PC-9 (cell line): ENCODE measurements at regions of chr15 and their contacts with region 1.

Region 1: DNA sequence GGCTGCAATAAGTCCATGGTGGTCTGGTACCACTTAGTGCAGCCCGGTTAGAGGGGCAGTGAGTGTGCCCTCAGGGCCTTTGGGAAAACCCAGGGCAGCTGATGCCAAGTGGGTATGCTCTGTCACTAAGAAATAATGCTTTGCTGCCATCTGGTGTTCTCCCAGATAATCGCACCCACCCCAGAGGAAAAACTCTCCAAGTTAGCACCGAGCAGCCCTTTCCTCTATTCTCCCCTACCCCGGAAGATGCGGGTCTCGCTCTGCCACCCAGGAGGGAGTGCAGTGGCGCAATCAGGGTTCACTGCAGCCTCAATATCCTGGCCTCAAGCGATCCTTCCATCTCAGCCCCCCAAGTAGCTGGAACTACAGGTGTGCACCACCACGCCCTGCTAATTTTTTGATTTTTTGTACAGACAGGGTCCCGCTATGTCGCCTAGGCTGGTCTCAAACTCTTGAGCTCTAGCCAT is 21.3 kb upstream of the DAPK2 start:
- DNase-seq: peak in 1 of 2 experiments; percentile 59
- H3K4me3 ChIP-seq: no peak overlapping the region
- H3K27ac ChIP-seq: no peak overlapping the region
- H3K4me1 ChIP-seq: no peaks in the 10 kb centered on the region
- H3K27me3 ChIP-seq: no peaks in the 10 kb centered on the region
- CTCF ChIP-seq: peak; percentile 80

Region 2: DNA sequence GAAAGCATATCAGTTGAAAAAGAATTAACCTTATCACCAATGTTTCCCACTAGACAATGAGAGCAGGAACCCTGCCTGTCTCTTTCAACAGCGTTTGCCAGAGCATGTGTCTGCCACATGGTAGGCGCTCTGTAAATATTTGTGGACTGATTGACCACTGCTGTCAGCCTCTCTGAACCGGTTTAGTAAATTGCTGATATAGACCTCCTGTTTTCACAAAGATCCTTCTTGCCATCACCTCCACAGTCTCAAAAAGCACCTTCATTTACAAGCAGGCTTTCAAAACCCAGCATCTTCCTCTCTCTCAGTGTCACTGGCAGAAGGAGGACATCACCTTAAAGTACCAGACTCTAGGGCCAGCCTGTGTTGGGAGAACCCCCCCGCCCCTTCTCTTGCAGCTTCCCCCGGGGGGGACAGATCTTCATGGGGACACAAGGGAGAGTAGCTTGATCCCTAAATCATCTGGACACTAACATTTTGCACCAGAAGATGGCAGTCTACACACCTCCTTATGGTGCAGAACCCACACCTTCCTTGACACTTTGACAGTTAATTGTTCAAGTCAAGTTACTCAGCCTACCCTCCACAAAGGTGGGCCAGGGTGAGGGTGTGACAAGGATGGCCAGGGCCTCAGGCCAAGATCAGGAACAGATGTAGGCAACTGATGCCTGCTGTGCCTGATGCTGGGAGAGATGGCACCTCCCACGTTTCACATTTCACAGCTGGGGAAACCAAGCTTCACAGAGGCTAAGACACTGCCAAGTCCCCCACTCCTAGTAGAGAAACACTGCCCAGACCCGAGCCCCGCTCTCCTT is 601.0 kb before region 1 on chr15:
- CTCF ChIA-PET with region 1: no interaction called
- POLR2A ChIA-PET with region 1: no interaction called
- intact Hi-C with region 1: loop called (anchors 10 kb)
- DNase-seq: peak; percentile 38 to 39
- H3K4me3 ChIP-seq: no peak overlapping the region
- H3K27ac ChIP-seq: no peak overlapping the region
- H3K4me1 ChIP-seq: peaks cover 12% of the 10 kb centered on the region
- H3K27me3 ChIP-seq: no peaks in the 10 kb centered on the region
- CTCF ChIP-seq: peak; percentile 65

Region 3: DNA sequence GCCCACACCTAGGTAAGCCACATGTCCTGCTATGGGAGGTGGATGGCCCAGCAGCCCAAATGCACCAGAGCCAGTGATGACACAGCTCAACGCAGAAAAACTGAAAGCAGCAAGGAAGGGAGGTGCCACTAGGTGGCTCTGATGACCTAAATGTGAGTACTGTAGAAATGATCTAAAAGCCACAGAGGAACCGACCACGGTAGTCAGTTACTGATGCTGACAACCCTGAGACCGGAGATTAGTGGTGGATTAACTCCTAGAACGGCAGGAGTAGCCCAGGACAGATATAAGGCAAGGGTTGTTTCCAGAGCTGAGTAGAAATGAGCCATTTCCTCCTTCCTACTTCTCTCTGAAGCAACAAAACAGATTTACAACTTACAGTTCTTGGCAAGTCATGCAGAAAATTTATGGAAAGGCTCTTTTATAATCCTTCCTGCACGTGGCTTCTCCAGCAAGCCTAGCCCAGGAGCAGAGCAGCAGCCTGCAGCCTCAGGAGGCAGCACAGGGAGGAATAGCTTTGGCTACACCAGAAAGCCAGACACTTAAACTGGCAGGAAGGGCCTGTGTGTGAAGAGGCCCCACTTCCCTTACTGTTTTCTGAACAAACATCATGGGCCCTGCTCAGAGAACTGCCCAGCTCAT is 457.3 kb before region 1 on chr15:
- CTCF ChIA-PET with region 1: interaction called, 4 read pairs
- POLR2A ChIA-PET with region 1: no interaction called
- intact Hi-C with region 1: loop called (anchors 1 kb)
- DNase-seq: peak; percentile 68 to 77
- H3K4me3 ChIP-seq: no peak overlapping the region
- H3K27ac ChIP-seq: peak overlapping the region; percentile 55
- H3K4me1 ChIP-seq: peaks cover 22% of the 10 kb centered on the region
- H3K27me3 ChIP-seq: no peaks in the 10 kb centered on the region
- CTCF ChIP-seq: peak; percentile 84

Region 4: DNA sequence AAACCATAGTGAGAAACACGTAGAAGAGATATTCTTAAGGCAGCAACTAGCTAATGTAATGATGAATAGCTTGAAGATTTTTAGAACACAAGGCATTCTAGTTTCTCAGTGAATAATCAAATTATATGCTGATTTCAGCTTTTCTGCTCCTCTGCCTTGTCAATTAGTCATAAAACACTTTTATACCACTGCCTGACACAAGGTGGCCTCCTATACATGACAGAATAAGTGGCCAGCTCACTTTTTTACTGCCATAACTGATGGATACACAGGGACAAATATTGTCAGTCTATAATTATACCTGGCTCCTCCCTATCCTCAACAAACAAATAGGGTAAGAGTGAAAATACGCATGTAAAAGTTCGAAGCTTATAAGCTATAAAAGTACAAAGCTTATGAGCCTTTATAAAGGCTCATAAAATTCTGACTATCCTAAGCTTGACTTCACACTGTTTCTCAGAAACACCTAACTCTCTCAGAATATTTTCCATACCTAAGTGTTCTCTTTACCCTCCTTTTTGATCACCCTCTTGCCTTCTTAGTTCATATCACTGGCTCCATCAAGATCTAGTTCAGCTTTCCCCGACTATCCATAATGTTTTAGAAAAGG is 315.4 kb before region 1 on chr15:
- CTCF ChIA-PET with region 1: interaction called, 31 read pairs
- POLR2A ChIA-PET with region 1: no interaction called
- intact Hi-C with region 1: loop called (anchors 1 kb)
- DNase-seq: peak in 1 of 2 experiments; percentile 11
- H3K4me3 ChIP-seq: no peak overlapping the region
- H3K27ac ChIP-seq: no peak overlapping the region
- H3K4me1 ChIP-seq: no peaks in the 10 kb centered on the region
- H3K27me3 ChIP-seq: no peaks in the 10 kb centered on the region
- CTCF ChIP-seq: peak; percentile 73

Region 5: DNA sequence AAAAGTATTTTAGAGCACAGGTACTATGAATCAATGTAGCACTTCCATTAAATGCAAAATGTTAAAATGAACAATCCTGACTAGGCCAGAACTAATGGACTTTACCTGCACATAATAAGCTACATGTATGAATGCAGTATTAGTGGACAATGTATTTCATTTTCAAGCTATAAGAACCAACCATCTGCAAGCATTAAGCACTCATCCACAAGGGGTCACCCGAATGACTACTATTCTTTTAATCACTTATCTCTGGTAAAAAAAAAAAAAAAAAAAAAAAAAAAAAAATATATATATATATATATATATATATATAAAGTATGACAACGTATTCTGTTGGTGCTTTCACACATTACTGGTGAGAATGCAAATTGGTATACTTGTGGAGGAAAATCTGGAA is 241.1 kb before region 1 on chr15:
- CTCF ChIA-PET with region 1: interaction called, 3 read pairs
- POLR2A ChIA-PET with region 1: no interaction called
- intact Hi-C with region 1: loop called (anchors 1 kb)
- DNase-seq: no peak
- H3K4me3 ChIP-seq: no peak overlapping the region
- H3K27ac ChIP-seq: no peak overlapping the region
- H3K4me1 ChIP-seq: no peaks in the 10 kb centered on the region
- H3K27me3 ChIP-seq: no peaks in the 10 kb centered on the region
- CTCF ChIP-seq: peak; percentile 38

Region 6: GRCh38 chr15:63833021-63833696 is 234.4 kb before region 1 on chr15:
- CTCF ChIA-PET with region 1: no interaction called
- POLR2A ChIA-PET with region 1: no interaction called
- intact Hi-C with region 1: loop called (anchors 1 kb)
- DNase-seq: peak in 1 of 2 experiments; percentile 37
- H3K4me3 ChIP-seq: peak overlapping the region; percentile 90
- H3K27ac ChIP-seq: no peak overlapping the region
- H3K4me1 ChIP-seq: peaks cover 16% of the 10 kb centered on the region
- H3K27me3 ChIP-seq: no peaks in the 10 kb centered on the region
- CTCF ChIP-seq: no peak

Region 7: GRCh38 chr15:63891079-63891767 is 176.4 kb before region 1 on chr15:
- CTCF ChIA-PET with region 1: no interaction called
- POLR2A ChIA-PET with region 1: no interaction called
- intact Hi-C with region 1: loop called (anchors 5 kb)
- DNase-seq: peak; percentile 51 to 75
- H3K4me3 ChIP-seq: no peak overlapping the region
- H3K27ac ChIP-seq: no peak overlapping the region
- H3K4me1 ChIP-seq: peaks cover 13% of the 10 kb centered on the region
- H3K27me3 ChIP-seq: no peaks in the 10 kb centered on the region
- CTCF ChIP-seq: peak; percentile 84

Region 8: GRCh38 chr15:64044300-64045108 is 23.1 kb before region 1 on chr15:
- CTCF ChIA-PET with region 1: no interaction called
- POLR2A ChIA-PET with region 1: no interaction called
- intact Hi-C with region 1: no loop called
- DNase-seq: no peak
- H3K4me3 ChIP-seq: no peak overlapping the region
- H3K27ac ChIP-seq: no peak overlapping the region
- H3K4me1 ChIP-seq: no peaks in the 10 kb centered on the region
- H3K27me3 ChIP-seq: no peaks in the 10 kb centered on the region
- CTCF ChIP-seq: no peak